ENCODE measurements at regions of chr18 and their contacts with region 1.

Region 1: DNA sequence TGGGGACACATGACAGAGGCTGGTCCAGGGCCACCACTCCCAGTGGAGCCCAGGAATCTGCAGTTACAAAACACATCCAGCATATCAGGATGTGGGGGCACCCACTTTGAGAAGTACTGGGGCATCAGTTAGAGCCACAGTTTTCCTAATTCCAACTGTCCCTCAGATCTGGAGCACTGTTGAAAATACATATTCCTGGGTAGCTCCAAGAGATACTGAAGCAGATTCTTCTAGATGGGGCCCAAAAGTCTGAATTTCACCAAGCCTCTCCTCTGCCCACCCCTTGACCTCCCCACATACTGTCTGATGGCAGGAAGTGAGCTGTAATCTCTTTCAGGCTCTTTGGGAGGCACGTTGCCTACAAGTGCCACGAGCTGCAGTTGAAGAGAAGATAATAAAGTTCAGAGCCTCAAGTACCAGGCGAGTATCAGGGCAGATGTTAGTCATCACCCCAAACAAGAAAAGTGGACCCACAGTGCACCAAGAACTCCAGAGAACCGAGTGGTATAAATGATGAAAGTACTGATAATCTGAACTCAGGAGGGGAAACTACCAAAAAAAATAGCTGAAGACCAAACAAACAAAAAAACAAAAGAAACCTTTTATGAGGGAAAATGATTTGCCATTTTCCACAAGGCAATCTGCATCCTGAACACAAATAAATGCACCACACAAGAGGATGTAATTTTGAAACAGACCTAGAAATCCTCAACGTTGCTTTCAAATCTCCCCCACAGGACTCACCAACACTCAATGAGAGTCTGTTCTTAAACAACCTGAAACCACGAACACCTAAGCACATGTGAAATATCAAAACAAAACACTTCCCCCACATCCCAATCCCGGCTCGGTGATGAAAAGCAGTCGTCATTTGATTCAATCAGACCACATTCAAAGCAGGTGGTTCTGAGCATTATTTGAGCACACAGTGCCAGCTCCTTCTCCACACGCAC is 98.7 kb downstream of the TCF4 start:
- DNase-seq: peak; percentile 71
- ATAC-seq: peak; percentile 86
- H3K4me3 Mint-ChIP-seq: peak overlapping the region; percentile 33
- H3K27ac Mint-ChIP-seq: peak overlapping the region; percentile 87
- H3K4me1 Mint-ChIP-seq: peaks cover 19% of the 10 kb centered on the region
- H3K27me3 Mint-ChIP-seq: peaks cover 19% of the 10 kb centered on the region
- CTCF ChIP-seq: no peak

Region 2: GRCh38 chr18:55522011-55522410 is 32.7 kb after region 1 on chr18:
- CTCF ChIA-PET with region 1: no interaction called
- POLR2A ChIA-PET with region 1: no interaction called
- intact Hi-C with region 1: no loop called
- DNase-seq: peak; percentile 55
- ATAC-seq: no peak
- H3K4me3 Mint-ChIP-seq: no peak overlapping the region
- H3K27ac Mint-ChIP-seq: no peak overlapping the region
- H3K4me1 Mint-ChIP-seq: no peaks in the 10 kb centered on the region
- H3K27me3 Mint-ChIP-seq: peaks cover 2% of the 10 kb centered on the region
- CTCF ChIP-seq: peak; percentile 35

Region 3: GRCh38 chr18:55589625-55590291 is 100.4 kb after region 1 on chr18:
- CTCF ChIA-PET with region 1: no interaction called
- POLR2A ChIA-PET with region 1: no interaction called
- intact Hi-C with region 1: loop called (anchors 10 kb)
- DNase-seq: peak; percentile 85
- ATAC-seq: peak; percentile 84
- H3K4me3 Mint-ChIP-seq: peak overlapping the region; percentile 80
- H3K27ac Mint-ChIP-seq: peak overlapping the region; percentile 68
- H3K4me1 Mint-ChIP-seq: peaks cover 22% of the 10 kb centered on the region
- H3K27me3 Mint-ChIP-seq: peaks cover 33% of the 10 kb centered on the region
- CTCF ChIP-seq: no peak

Measured in activated CD8-positive, alpha-beta T cell treated with anti-CD3 and anti-CD28 coated beads for 36 hours (primary cell).